ENCODE measurements at regions of chr7 and their contacts with region 1.

Region 1: GRCh38 chr7:120799813-120800475 is 58.0 kb downstream of the TSPAN12 start:
- DNase-seq: no peak
- CTCF ChIP-seq: no peak

Region 2: DNA sequence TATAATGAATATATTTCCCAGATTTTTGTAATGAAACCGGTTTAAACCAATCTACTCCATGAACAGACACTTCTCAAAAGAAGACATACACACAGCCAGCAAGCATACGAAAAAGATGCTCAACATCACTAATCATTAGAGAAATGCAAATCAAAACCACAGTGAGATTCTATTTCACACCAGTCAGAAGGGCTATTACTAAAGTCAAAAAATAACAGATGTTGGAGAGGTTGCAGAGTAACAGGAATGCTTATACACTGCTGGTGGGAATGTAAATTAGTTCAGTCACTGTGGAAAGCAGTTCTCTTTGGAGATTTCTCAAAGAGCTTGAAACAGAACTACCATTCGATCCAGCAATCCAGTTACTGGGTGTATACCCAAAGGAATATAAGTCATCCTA is 182.7 kb before region 1 on chr7:
- in situ Hi-C with region 1: no loop called
- DNase-seq: no peak
- CTCF ChIP-seq: no peak

Region 3: GRCh38 chr7:120639884-120640283 is 160.1 kb before region 1 on chr7:
- in situ Hi-C with region 1: no loop called
- DNase-seq: no peak
- CTCF ChIP-seq: no peak

Region 4: GRCh38 chr7:120927454-120928103 is 127.6 kb after region 1 on chr7:
- in situ Hi-C with region 1: no loop called
- DNase-seq: peak; percentile 10
- CTCF ChIP-seq: no peak

Region 5: GRCh38 chr7:120938991-120939744 is 139.2 kb after region 1 on chr7:
- in situ Hi-C with region 1: loop called (anchors 5 kb)
- DNase-seq: no peak
- CTCF ChIP-seq: no peak

Measured in GM13976 (cell line).